ENCODE measurements at regions of chr9 and their contacts with region 1.

Region 1: DNA sequence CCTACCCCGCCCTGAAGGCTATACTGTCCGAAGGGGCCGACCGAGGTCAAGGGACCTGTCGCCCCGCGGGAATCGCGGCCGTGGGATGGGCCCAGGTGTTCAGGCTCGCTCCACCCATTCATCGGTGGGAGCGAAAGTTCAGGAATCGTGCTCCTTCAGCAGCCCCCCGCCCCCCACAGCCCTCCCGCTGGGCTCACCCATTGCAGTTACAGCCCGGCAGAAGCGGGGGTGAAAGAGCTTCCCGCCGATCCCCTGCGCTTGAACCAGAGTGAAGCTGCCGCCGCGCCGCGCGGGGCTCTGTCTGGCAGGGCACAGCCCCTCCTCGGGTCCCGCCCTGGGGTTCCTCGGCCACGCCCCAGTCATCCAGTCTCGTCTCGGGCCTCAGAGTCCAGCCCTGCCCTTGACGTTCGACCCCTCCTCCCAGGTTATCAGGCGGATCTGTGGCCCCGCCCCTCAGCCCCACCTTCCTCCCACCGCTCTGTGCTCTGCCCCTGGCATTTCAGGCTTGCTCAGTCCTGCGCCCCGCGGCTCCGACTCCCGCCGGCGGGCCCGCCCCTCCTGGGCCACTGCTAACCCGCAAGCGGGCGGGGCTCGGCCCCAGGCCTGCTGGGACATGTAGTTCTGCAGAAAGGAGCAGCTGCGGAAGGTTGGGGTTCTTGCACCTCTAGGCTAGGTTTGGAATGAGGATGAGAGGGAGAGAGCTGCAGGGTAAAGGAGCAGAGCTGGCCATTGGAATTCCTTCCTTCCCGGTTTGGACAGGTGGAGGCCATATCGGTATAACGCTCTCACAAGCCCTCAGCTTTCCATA is at the start of gene MYORG:
- DNase-seq: peak; percentile 95
- H3K4me3 ChIP-seq: peak within 1 kb of the TSS; percentile 67
- H3K27ac ChIP-seq: peak within 1 kb of the TSS; percentile 60
- H3K4me1 ChIP-seq: peaks cover 25% of the 10 kb centered on the region
- H3K27me3 ChIP-seq: no peaks in the 10 kb centered on the region
- CTCF ChIP-seq: no peak
- total RNA-seq, gene MYORG: 7.8 and 7.9 TPM in 2 replicates

Region 2: DNA sequence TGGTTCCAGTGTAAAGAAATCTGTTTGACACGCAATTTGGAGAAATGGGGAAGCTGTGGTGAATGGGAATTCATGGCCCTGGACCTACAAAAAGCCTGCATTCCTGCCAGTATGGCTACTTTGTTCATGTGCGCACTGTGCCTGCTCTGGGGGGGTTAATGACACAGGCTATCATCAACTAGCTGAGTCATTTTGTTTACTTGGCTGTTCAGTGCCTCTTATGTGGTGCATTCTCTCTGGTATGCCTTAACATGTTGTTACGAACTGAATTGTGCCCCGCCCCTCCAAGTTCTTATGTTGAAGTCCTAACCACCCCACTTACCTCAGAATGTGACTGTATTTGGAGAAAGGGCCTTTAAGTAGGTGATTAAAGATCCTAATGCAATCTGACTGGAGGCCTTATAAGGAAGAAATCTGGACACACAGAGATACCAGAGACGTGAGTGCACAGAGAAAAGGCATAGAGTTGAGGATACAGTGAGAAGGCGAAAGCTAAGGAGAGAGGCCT is 218.4 kb before region 1 on chr9:
- CTCF ChIA-PET with region 1: no interaction called
- POLR2A ChIA-PET with region 1: no interaction called
- intact Hi-C with region 1: no loop called
- DNase-seq: no peak
- H3K4me3 ChIP-seq: no peak overlapping the region
- H3K27ac ChIP-seq: no peak overlapping the region
- H3K4me1 ChIP-seq: no peaks in the 10 kb centered on the region
- H3K27me3 ChIP-seq: no peaks in the 10 kb centered on the region
- CTCF ChIP-seq: no peak

Region 3: GRCh38 chr9:34328987-34329832 is 47.6 kb before region 1 on chr9 and contains the starts of genes KIF24 and NUDT2:
- CTCF ChIA-PET with region 1: interaction called, 20 read pairs
- POLR2A ChIA-PET with region 1: no interaction called
- intact Hi-C with region 1: loop called (anchors 1 kb)
- DNase-seq: peak; percentile 100
- H3K4me3 ChIP-seq: peak within 1 kb of the TSS; percentile 87
- H3K27ac ChIP-seq: peak within 1 kb of the TSS; percentile 91
- H3K4me1 ChIP-seq: peaks cover 30% of the 10 kb centered on the region
- H3K27me3 ChIP-seq: no peaks in the 10 kb centered on the region
- CTCF ChIP-seq: no peak
- total RNA-seq, gene KIF24: 10.6 and 11.6 TPM in 2 replicates
- total RNA-seq, gene NUDT2: 19.1 and 25.3 TPM in 2 replicates

Region 4: GRCh38 chr9:34500623-34501267 is 123.9 kb after region 1 on chr9:
- CTCF ChIA-PET with region 1: no interaction called
- POLR2A ChIA-PET with region 1: no interaction called
- intact Hi-C with region 1: no loop called
- DNase-seq: peak; percentile 60
- H3K4me3 ChIP-seq: no peak overlapping the region
- H3K27ac ChIP-seq: no peak overlapping the region
- H3K4me1 ChIP-seq: no peaks in the 10 kb centered on the region
- H3K27me3 ChIP-seq: no peaks in the 10 kb centered on the region
- CTCF ChIP-seq: peak; percentile 97

Measured in A673 (cell line).